PC-3 (cell line): ENCODE measurements at regions of chr20 and their contacts with region 1.

Region 1: DNA sequence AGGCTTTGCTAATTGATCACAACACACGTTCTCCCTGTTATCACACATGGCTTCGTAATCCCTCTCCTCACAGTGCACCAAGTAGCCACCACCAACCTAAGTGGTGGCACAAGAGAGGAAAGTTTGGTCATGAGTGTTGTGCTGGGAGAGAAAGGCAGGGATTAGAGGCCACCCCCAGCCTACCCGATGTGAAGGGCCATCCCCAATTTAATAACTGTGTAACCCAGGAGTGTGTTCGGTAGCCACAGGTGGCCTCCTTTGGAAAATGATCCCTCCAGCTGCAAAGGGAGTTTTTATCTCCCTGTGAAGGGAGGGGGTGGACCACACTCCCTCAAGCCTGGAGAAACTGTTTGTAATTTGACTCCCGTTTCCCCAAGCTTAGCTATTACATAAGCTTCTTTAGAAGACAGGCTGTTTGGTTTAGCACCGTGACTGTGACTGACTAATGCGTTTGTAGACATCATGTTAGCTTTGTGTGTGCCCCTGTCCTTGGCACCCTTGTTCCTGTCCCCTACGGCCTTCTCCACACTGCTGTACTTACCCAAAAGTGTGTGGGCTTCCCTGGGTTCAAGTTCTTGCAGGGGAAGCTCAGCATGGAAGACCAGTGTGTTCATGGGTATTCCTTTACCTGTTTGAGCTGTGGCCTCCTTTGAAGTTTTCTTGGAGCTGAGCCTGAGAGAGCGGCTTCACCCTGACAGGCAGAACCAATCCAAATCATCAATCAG is 20.6 kb downstream of the PPP1R16B start:
- DNase-seq: peak; percentile 80
- ATAC-seq: peak; percentile 97
- H3K4me3 ChIP-seq: no peak overlapping the region
- H3K27ac ChIP-seq: no peak overlapping the region
- H3K4me1 ChIP-seq: peaks cover 13% of the 10 kb centered on the region; the same call in 1 of the 2 replicates
- H3K27me3 ChIP-seq: peaks cover 27% of the 10 kb centered on the region; the same call in 1 of the 2 replicates
- CTCF ChIP-seq: no peak

Region 2: DNA sequence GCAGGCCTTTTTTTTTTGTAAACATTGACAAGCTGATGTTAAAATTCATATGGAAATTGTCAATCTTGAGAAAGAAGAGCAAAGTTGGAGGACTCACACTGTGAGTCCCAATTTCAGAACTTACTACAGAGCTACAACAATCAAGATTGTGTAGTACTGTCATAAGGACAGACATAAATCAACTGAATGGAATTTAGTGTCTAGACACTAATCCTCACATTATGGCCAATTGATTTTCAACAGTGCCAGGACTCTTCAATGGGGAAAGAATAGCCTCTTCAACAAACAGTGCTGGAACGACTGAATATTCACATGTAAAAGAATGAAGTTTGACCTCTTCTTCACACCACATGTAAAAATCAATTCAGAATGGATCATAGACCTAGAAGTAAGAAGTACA is 721.8 kb before region 1 on chr20:
- CTCF ChIA-PET with region 1: interaction called, 12 read pairs
- POLR2A ChIA-PET with region 1: no interaction called
- intact Hi-C with region 1: no loop called
- DNase-seq: no peak
- ATAC-seq: no peak
- H3K4me3 ChIP-seq: no peak overlapping the region
- H3K27ac ChIP-seq: no peak overlapping the region
- H3K4me1 ChIP-seq: peaks cover 23% of the 10 kb centered on the region
- H3K27me3 ChIP-seq: no peaks in the 10 kb centered on the region
- CTCF ChIP-seq: no peak

Region 3: GRCh38 chr20:38395165-38395564 is 430.9 kb before region 1 on chr20:
- CTCF ChIA-PET with region 1: no interaction called
- POLR2A ChIA-PET with region 1: no interaction called
- intact Hi-C with region 1: no loop called
- DNase-seq: no peak
- ATAC-seq: no peak
- H3K4me3 ChIP-seq: no peak overlapping the region
- H3K27ac ChIP-seq: no peak overlapping the region
- H3K4me1 ChIP-seq: peaks cover 4% of the 10 kb centered on the region; the same call in 1 of the 2 replicates
- H3K27me3 ChIP-seq: no peaks in the 10 kb centered on the region
- CTCF ChIP-seq: no peak

Region 4: GRCh38 chr20:38875175-38875993 is 49.3 kb after region 1 on chr20:
- CTCF ChIA-PET with region 1: no interaction called
- POLR2A ChIA-PET with region 1: no interaction called
- intact Hi-C with region 1: no loop called
- DNase-seq: no peak
- ATAC-seq: no peak
- H3K4me3 ChIP-seq: no peak overlapping the region
- H3K27ac ChIP-seq: no peak overlapping the region
- H3K4me1 ChIP-seq: peaks cover 19% of the 10 kb centered on the region
- H3K27me3 ChIP-seq: peaks cover 10% of the 10 kb centered on the region; the same call in 1 of the 2 replicates
- CTCF ChIP-seq: no peak